SK-N-SH (cell line): ENCODE measurements at regions of chr9 and their contacts with region 1.

Region 1: DNA sequence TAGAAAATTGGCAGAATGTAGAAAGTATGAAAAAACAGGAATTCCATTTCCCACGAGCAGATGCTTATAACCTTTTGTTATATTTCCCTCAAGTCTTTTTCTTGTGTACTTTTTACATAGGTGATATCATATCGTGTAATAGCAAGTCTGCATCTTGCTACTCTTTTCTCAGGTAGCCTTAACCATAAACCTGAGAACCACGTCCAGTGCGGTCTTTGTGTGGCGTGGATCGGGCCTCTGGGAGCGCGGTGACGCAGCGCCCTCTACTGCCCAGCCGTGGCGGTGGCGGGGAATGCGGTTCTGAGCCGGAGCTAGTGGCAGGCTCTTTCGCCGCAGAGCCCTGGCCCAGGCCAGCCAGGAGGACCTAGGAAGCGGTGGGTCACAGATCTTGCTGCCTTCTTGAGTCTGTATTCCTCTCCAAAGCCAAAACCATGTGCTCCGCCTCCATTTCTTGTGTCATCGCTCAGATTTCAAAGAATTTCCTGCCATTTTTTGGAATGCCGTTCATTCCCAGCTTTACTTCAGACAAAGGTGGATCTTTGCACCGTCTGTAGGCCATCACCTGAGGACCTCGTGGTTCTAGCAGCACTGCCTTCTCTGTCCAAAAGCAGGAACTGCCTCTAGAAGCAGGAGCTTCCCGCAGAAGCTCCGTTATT is 71.9 kb downstream of the MVB12B start:
- DNase-seq: peak; percentile 91
- H3K4me3 ChIP-seq: peak overlapping the region in 1 of 2 experiments; percentile 51; a peak in 1 of 4 replicates
- H3K27ac ChIP-seq: no peak overlapping the region
- H3K4me1 ChIP-seq: peaks cover 3 to 5% of the 10 kb centered on the region in 2 experiments; a peak in 1 of 4 replicates
- H3K27me3 ChIP-seq: no peaks in the 10 kb centered on the region
- CTCF ChIP-seq: peak; percentile 99
- EP300 ChIP-seq: no peak
- RAD21 ChIP-seq: peak; percentile 98

Region 2: DNA sequence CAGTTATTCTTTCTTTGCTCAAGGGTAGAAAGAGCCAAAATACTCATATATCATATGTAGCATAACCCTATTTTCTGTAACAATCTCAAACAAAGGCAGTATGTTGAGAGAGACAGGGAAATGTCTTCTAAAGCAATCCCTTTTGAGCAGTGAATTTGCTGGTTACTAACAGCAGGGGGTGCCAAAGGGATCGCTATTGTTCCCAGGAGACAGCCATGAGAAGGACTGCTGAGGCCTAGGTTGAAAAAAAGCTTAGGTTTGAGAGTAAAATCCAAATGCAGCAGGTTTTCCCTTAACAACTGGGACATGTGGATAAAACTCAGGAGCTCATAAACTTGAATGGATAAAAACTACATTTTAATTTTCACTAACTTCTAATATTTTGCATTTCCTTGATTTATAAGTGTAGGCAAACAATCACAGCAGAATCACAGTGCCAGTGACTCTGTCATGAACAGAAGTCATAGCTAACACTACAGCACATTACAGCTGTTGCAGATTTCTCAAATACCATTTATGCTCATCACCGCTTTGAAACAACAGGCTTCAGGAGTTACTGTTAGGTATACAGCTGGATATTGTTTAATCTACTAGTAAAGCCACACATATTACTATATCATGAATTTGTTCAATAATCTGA is 840.0 kb before region 1 on chr9:
- CTCF ChIA-PET with region 1: interaction called, 11 read pairs
- POLR2A ChIA-PET with region 1: no interaction called
- DNase-seq: peak; percentile 68
- H3K4me3 ChIP-seq: no peak overlapping the region; a peak in 1 of 4 replicates
- H3K27ac ChIP-seq: peak overlapping the region; percentile 43 to 58
- H3K4me1 ChIP-seq: peaks cover 4 to 6% of the 10 kb centered on the region in 2 experiments; a peak in 3 of 4 replicates
- H3K27me3 ChIP-seq: no peaks in the 10 kb centered on the region
- CTCF ChIP-seq: peak; percentile 86
- EP300 ChIP-seq: no peak
- RAD21 ChIP-seq: peak; percentile 93

Region 3: GRCh38 chr9:126293522-126293889 is 105.0 kb before region 1 on chr9:
- CTCF ChIA-PET with region 1: interaction called, 35 read pairs
- POLR2A ChIA-PET with region 1: no interaction called
- DNase-seq: peak; percentile 54
- H3K4me3 ChIP-seq: no peak overlapping the region
- H3K27ac ChIP-seq: no peak overlapping the region
- H3K4me1 ChIP-seq: no peaks in the 10 kb centered on the region; a peak in 1 of 4 replicates
- H3K27me3 ChIP-seq: 0 out of 2 replicates have a peak, but pooled peaks cover 4% of the 10 kb centered on the region
- CTCF ChIP-seq: peak; percentile 47
- EP300 ChIP-seq: no peak
- RAD21 ChIP-seq: 0 out of 2 replicates have a peak, but pooled peaks have one; percentile 5

Region 4: GRCh38 chr9:126335837-126336735 is 62.4 kb before region 1 on chr9:
- CTCF ChIA-PET with region 1: interaction called, 13 read pairs
- POLR2A ChIA-PET with region 1: no interaction called
- DNase-seq: peak; percentile 43
- H3K4me3 ChIP-seq: no peak overlapping the region
- H3K27ac ChIP-seq: no peak overlapping the region
- H3K4me1 ChIP-seq: peaks cover 0 to 23% of the 10 kb centered on the region in 2 experiments; a peak in 1 of 4 replicates
- H3K27me3 ChIP-seq: no peaks in the 10 kb centered on the region
- CTCF ChIP-seq: no peak
- EP300 ChIP-seq: no peak
- RAD21 ChIP-seq: no peak

Region 5: GRCh38 chr9:126386088-126386487 is 12.4 kb before region 1 on chr9:
- CTCF ChIA-PET with region 1: interaction called, 43 read pairs
- POLR2A ChIA-PET with region 1: no interaction called
- DNase-seq: no peak
- H3K4me3 ChIP-seq: no peak overlapping the region
- H3K27ac ChIP-seq: no peak overlapping the region
- H3K4me1 ChIP-seq: peaks cover 0 to 5% of the 10 kb centered on the region in 2 experiments; a peak in 1 of 4 replicates
- H3K27me3 ChIP-seq: no peaks in the 10 kb centered on the region
- CTCF ChIP-seq: peak; percentile 28; the same call in 1 of the 2 replicates
- EP300 ChIP-seq: no peak
- RAD21 ChIP-seq: peak; percentile 51

Region 6: GRCh38 chr9:126482361-126483044 is 84.0 kb after region 1 on chr9:
- CTCF ChIA-PET with region 1: interaction called, 10 read pairs
- POLR2A ChIA-PET with region 1: no interaction called
- DNase-seq: no peak
- H3K4me3 ChIP-seq: no peak overlapping the region
- H3K27ac ChIP-seq: no peak overlapping the region
- H3K4me1 ChIP-seq: no peaks in the 10 kb centered on the region
- H3K27me3 ChIP-seq: no peaks in the 10 kb centered on the region
- CTCF ChIP-seq: no peak
- EP300 ChIP-seq: no peak
- RAD21 ChIP-seq: no peak